Panc1 (cell line): ENCODE measurements at regions of chr7 and their contacts with region 1.

Region 1: GRCh38 chr7:1382553-1383397 is 76.5 kb downstream of the MICALL2 start:
- DNase-seq: no peak
- ATAC-seq: no peak
- H3K4me3 ChIP-seq: no peak overlapping the region
- H3K27ac ChIP-seq: no peak overlapping the region
- H3K4me1 ChIP-seq: no peaks in the 10 kb centered on the region
- H3K27me3 ChIP-seq: no peaks in the 10 kb centered on the region
- CTCF ChIP-seq: no peak

Region 2: GRCh38 chr7:1193593-1194424 is 189.0 kb before region 1 on chr7:
- CTCF ChIA-PET with region 1: interaction called, 12 read pairs
- POLR2A ChIA-PET with region 1: no interaction called
- in situ Hi-C with region 1: no loop called
- intact Hi-C with region 1: no loop called
- DNase-seq: no peak
- ATAC-seq: peak; percentile 97
- H3K4me3 ChIP-seq: no peak overlapping the region
- H3K27ac ChIP-seq: no peak overlapping the region
- H3K4me1 ChIP-seq: peaks cover 4% of the 10 kb centered on the region; the same call in 1 of the 2 replicates
- H3K27me3 ChIP-seq: no peaks in the 10 kb centered on the region
- CTCF ChIP-seq: peak; percentile 92

Region 3: DNA sequence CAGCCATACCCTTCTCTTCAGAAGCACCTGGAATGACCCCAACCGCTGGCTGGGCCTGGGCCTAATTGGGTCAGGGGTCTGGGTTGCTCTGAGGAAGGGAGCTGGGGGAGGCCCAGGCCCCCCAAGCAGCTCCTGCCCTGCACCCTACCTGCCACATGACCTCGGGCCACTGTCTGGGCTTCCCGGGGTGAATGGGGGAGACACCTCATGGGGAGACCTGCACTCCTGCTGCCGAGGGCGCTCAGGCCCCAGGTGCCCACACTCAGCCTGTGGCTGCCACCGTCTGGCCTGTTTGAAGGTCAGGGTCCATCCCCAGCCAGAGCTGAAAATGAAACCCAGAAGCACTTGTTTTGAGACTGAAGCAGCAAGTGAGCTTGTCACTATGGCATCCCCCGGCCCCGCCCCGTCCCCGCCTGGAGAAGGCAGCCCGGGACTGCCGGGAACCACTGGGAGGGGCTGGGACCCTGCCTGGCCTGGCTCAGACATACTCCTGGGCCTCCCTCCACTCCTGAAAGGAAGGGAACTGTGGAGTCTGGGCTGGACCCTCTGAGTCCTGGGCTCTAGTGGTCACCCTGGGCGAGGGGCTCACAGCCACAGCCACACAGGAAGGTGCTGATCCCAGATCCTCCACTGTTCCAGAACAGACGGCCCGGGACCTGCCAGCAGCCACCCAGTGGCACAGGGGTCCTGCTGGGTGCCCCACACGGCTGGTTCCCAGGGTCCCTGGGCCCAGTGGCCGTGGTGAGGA is 83.9 kb after region 1 on chr7:
- CTCF ChIA-PET with region 1: no interaction called
- POLR2A ChIA-PET with region 1: no interaction called
- in situ Hi-C with region 1: no loop called
- intact Hi-C with region 1: no loop called
- DNase-seq: no peak
- ATAC-seq: peak; percentile 36
- H3K4me3 ChIP-seq: no peak overlapping the region
- H3K27ac ChIP-seq: peak overlapping the region; percentile 29
- H3K4me1 ChIP-seq: peaks cover 24% of the 10 kb centered on the region
- H3K27me3 ChIP-seq: no peaks in the 10 kb centered on the region
- CTCF ChIP-seq: no peak

Region 4: DNA sequence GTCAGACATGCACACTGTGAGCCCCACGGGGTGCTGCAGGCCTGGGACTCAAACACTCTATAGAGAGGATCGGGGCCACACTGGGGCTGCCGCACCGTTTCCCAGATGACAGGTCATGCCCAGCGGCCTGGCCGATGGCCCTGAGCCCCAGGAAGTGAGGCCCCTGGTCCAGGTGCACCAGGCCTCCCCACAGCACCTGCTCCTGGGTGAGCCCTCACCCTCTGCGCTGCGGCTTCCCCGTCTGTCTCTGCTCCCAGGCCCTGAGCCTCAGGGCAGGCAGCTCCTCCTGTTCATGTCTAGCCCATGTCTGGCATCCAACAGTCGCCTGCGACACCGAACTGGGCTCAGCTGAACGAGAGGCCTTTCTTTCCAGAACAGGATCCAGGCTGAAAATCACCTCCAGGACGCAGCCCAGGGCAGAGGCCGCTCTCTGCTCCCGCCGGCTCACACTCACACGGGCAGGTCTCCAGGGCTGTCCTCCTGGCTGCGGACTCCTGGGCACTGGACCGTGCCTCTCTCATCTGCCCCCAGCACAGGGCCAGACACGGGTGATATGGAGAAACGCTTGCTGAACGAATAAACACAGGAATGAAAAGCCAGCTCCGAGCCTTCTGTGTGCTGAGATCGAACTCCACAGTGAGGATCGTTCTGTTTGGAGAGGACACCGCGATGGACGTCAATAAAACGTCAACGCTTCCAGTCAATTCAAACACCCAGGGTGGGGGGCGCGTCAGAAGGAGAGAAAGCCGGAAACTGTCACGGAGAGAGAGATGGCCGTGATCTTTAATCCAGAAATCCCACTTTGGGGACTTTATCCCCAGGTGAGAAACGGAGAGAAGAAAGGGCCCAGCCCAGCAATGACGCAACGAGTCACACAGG is 489.7 kb after region 1 on chr7:
- CTCF ChIA-PET with region 1: no interaction called
- POLR2A ChIA-PET with region 1: no interaction called
- in situ Hi-C with region 1: no loop called
- intact Hi-C with region 1: no loop called
- DNase-seq: no peak
- ATAC-seq: no peak
- H3K4me3 ChIP-seq: no peak overlapping the region
- H3K27ac ChIP-seq: no peak overlapping the region
- H3K4me1 ChIP-seq: no peaks in the 10 kb centered on the region
- H3K27me3 ChIP-seq: no peaks in the 10 kb centered on the region
- CTCF ChIP-seq: no peak